ENCODE measurements at regions of chr15 and their contacts with region 1.

Region 1: DNA sequence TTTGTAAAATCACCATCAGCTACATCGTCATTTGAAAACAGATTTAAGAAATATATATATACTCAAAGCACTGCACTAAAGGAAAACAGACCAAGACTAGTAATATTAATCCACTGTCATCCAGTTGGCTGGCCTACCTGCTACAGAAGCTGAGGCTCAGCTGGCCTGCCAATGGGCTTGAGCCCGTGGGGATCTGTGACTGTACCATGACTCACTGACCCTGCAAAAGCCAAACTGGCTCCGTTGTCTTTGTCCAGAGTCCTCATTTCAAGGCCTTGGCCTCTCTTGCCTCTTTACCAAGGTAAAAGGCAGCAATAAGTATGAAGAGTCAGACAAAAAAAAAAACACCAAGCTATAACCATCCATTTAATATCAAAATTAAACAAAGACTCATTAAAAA is 463.5 kb upstream of the RASGRP1 start:
- DNase-seq: no peak
- ATAC-seq: no peak
- H3K4me3 ChIP-seq: no peak overlapping the region
- H3K4me3 Mint-ChIP-seq: no peak overlapping the region
- H3K27ac ChIP-seq: no peak overlapping the region
- H3K27ac Mint-ChIP-seq: no peak overlapping the region
- H3K4me1 ChIP-seq: no peaks in the 10 kb centered on the region
- H3K4me1 Mint-ChIP-seq: no peaks in the 10 kb centered on the region
- H3K27me3 ChIP-seq: no peaks in the 10 kb centered on the region
- H3K27me3 Mint-ChIP-seq: peaks cover 8% of the 10 kb centered on the region
- CTCF ChIP-seq: no peak

Region 2: DNA sequence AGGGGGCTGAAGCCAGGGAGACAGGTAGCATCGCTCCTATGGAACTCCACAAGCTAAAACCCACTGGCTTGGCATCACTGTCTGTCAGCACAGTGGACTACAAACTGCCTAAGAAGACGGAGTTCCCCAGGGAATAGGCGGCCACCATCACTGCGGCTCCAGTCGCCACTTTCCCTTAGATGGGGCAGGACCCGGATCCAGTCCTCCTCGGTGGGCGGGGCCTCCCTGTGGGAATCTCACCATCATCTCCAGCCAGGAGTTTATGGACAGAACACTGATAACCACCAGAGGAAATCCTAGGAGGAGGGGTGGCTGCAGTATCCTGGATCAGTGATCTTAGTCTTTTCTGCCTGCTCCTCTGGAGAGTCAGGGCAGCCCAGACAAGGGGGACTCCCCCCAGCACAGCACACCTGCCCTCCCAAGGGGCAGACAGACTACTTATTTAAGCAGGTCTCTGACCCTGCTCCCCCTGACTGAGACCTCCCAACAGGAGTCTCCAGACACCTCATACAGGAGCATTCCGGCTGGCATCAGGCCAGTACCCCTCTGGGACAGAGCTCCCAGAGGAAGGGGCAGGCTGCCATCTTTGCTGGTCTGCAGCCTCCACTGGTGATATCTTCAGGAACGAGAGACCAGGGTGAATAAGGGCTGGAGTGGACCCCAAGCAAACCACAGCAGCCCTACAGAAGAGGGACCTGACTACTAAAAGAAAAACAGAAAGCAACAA is 27.9 kb before region 1 on chr15:
- CTCF ChIA-PET with region 1: no interaction called
- POLR2A ChIA-PET with region 1: no interaction called
- intact Hi-C with region 1: no loop called
- DNase-seq: no peak
- ATAC-seq: no peak
- H3K4me3 ChIP-seq: no peak overlapping the region
- H3K4me3 Mint-ChIP-seq: no peak overlapping the region
- H3K27ac ChIP-seq: no peak overlapping the region
- H3K27ac Mint-ChIP-seq: no peak overlapping the region
- H3K4me1 ChIP-seq: peaks cover 4% of the 10 kb centered on the region
- H3K4me1 Mint-ChIP-seq: peaks cover 8% of the 10 kb centered on the region
- H3K27me3 ChIP-seq: peaks cover 0 to 2% of the 10 kb centered on the region in 2 experiments
- H3K27me3 Mint-ChIP-seq: peaks cover 21% of the 10 kb centered on the region
- CTCF ChIP-seq: no peak

Region 3: DNA sequence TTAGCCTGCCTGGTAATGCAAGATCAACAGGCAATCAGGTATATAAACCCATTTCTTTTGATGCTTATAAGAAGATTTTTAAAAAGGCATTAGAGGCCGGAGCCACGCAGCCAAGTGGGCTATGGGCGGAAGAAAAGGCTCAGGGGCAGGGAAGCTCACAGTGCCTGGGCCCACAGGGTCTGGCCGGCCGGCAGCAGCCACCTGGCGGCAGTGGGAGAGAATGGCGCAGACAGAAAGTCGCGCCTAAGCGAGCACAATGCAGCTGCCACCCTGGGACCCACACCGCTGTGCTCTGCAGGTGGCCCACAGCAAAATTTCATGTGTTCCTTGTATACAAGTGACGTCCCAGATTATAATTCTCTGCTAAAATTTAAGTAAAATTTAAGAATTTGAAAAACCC is 14.8 kb before region 1 on chr15:
- CTCF ChIA-PET with region 1: no interaction called
- POLR2A ChIA-PET with region 1: no interaction called
- intact Hi-C with region 1: loop called in 1 of 2 experiments (anchors 1 kb)
- DNase-seq: no peak
- ATAC-seq: no peak
- H3K4me3 ChIP-seq: no peak overlapping the region
- H3K4me3 Mint-ChIP-seq: no peak overlapping the region
- H3K27ac ChIP-seq: no peak overlapping the region
- H3K27ac Mint-ChIP-seq: no peak overlapping the region
- H3K4me1 ChIP-seq: no peaks in the 10 kb centered on the region
- H3K4me1 Mint-ChIP-seq: no peaks in the 10 kb centered on the region
- H3K27me3 ChIP-seq: no peaks in the 10 kb centered on the region
- H3K27me3 Mint-ChIP-seq: peaks cover 3% of the 10 kb centered on the region
- CTCF ChIP-seq: no peak

Region 4: GRCh38 chr15:39040861-39041260 is 12.8 kb after region 1 on chr15:
- CTCF ChIA-PET with region 1: no interaction called
- POLR2A ChIA-PET with region 1: no interaction called
- intact Hi-C with region 1: no loop called
- DNase-seq: no peak
- ATAC-seq: no peak
- H3K4me3 ChIP-seq: no peak overlapping the region
- H3K4me3 Mint-ChIP-seq: no peak overlapping the region
- H3K27ac ChIP-seq: no peak overlapping the region
- H3K27ac Mint-ChIP-seq: no peak overlapping the region
- H3K4me1 ChIP-seq: no peaks in the 10 kb centered on the region
- H3K4me1 Mint-ChIP-seq: no peaks in the 10 kb centered on the region
- H3K27me3 ChIP-seq: no peaks in the 10 kb centered on the region
- H3K27me3 Mint-ChIP-seq: peaks cover 31% of the 10 kb centered on the region
- CTCF ChIP-seq: no peak

Measured in CD8-positive, alpha-beta T cell (primary cell).